B cell (primary cell): ENCODE measurements at regions of chr15 and their contacts with region 1.

Region 1: DNA sequence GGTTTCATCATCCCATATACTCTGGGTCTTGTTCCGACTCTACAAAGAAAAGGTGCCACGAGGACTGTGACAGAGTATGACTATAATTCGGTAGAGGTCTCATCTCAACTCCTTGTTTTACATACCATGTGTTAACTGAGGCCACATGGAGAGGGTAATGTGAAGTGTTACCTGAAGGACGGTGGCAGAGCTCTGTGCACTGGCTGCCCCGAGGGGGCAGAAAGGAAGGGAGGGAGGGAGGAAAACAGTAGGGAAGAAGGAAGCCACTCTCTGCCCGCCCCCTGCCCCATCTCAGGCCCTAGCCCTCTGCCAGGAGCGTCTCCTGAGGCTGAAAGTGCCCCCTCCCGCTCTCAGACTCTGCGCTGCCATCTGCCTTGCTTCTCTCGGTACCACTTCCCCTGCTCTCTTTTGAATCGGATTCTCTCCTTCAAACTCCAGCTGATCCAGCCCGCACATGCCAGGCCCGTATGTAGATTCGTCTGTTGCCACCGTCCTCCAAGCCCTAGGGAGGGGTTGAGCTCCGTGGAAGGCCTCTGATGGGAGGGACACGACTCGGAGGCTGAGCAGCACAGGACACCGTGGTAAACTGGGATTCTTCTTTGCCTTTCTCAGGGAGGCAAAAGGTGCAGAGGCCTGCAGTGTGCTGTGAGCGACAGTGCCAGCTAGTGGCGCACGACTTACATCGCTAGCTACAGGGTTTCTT is 70.5 kb upstream of the ATP10A start:
- DNase-seq: peak; percentile 71
- ATAC-seq: peak; percentile 76
- H3K4me3 ChIP-seq: peak overlapping the region in 4 of 5 experiments; percentile 23 to 50 (median 36)
- H3K4me3 Mint-ChIP-seq: peak overlapping the region; percentile 87
- H3K27ac ChIP-seq: no peak overlapping the region
- H3K27ac Mint-ChIP-seq: no peak overlapping the region
- H3K4me1 ChIP-seq: peaks cover 12 to 21% of the 10 kb centered on the region in 2 donors
- H3K4me1 Mint-ChIP-seq: peaks cover 18% of the 10 kb centered on the region
- H3K27me3 ChIP-seq: peaks cover 0 to 12% (median 2%) of the 10 kb centered on the region in 4 experiments
- H3K27me3 Mint-ChIP-seq: peaks cover 13% of the 10 kb centered on the region
- CTCF ChIP-seq: peak; percentile 59

Region 2: DNA sequence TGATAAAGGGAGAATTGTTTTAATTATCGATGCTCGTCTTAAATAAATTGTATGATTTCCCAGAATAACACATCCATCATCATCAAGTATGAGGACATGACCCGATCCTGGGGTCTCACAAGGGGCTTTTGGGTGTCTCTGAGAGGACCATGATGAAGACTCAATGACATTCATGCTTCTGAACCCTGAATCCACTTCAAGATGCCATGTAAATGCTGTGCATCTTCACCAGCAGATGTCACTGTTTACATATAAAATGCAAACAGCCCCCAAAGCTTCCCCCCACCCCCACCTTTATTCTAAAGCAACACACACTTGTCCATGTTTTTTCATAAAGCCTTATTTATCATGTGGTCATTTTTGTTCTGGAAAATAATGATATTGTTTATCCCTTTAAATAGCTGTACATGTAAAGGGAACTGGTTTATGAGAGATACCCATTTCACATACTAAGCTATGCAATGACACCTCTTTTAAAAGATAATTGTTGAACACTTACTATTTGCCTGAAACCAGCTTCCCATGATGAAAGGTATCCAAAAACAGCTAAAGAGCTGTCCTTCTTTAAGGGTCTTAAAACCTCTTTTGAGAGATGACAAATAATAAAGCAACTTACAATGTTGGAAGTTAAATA is 425.1 kb before region 1 on chr15:
- CTCF ChIA-PET with region 1: interaction called, 17 read pairs
- POLR2A ChIA-PET with region 1: no interaction called
- intact Hi-C with region 1: no loop called
- DNase-seq: peak; percentile 40
- ATAC-seq: no peak
- H3K4me3 ChIP-seq: no peak overlapping the region
- H3K4me3 Mint-ChIP-seq: no peak overlapping the region
- H3K27ac ChIP-seq: no peak overlapping the region
- H3K27ac Mint-ChIP-seq: no peak overlapping the region
- H3K4me1 ChIP-seq: no peaks in the 10 kb centered on the region
- H3K4me1 Mint-ChIP-seq: no peaks in the 10 kb centered on the region
- H3K27me3 ChIP-seq: no peaks in the 10 kb centered on the region
- H3K27me3 Mint-ChIP-seq: no peaks in the 10 kb centered on the region
- CTCF ChIP-seq: peak; percentile 56

Region 3: DNA sequence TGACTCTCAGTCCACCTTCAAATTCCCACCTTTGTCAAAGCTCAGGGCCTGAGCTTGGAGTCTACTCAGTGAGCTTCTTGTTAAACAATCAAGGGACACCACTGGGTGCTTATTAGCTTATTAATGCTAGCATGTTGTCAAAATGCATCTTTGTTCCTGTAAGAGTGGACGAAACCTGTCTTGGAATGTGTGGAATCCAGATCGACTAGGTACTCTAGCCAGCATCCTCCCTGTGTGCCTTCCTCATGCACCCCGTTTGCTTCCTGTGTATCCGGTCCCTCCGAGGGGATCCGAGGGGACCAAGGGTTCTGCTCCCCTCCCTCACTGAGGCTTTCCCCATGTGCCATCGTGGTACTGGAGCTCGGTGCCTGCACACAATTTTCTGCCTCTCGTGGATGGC is 419.1 kb before region 1 on chr15:
- CTCF ChIA-PET with region 1: no interaction called
- POLR2A ChIA-PET with region 1: interaction called, 10 read pairs
- intact Hi-C with region 1: no loop called
- DNase-seq: no peak
- ATAC-seq: no peak
- H3K4me3 ChIP-seq: no peak overlapping the region
- H3K4me3 Mint-ChIP-seq: no peak overlapping the region
- H3K27ac ChIP-seq: no peak overlapping the region
- H3K27ac Mint-ChIP-seq: no peak overlapping the region
- H3K4me1 ChIP-seq: no peaks in the 10 kb centered on the region
- H3K4me1 Mint-ChIP-seq: no peaks in the 10 kb centered on the region
- H3K27me3 ChIP-seq: no peaks in the 10 kb centered on the region
- H3K27me3 Mint-ChIP-seq: no peaks in the 10 kb centered on the region
- CTCF ChIP-seq: no peak

Region 4: GRCh38 chr15:25710184-25710583 is 223.4 kb before region 1 on chr15:
- CTCF ChIA-PET with region 1: interaction called, 14 read pairs
- POLR2A ChIA-PET with region 1: no interaction called
- intact Hi-C with region 1: no loop called
- DNase-seq: peak; percentile 26
- ATAC-seq: peak; percentile 36
- H3K4me3 ChIP-seq: no peak overlapping the region
- H3K4me3 Mint-ChIP-seq: no peak overlapping the region
- H3K27ac ChIP-seq: no peak overlapping the region
- H3K27ac Mint-ChIP-seq: no peak overlapping the region
- H3K4me1 ChIP-seq: no peaks in the 10 kb centered on the region
- H3K4me1 Mint-ChIP-seq: no peaks in the 10 kb centered on the region
- H3K27me3 ChIP-seq: no peaks in the 10 kb centered on the region
- H3K27me3 Mint-ChIP-seq: peaks cover 3% of the 10 kb centered on the region
- CTCF ChIP-seq: peak; percentile 61

Region 5: GRCh38 chr15:25944386-25944785 is 10.8 kb after region 1 on chr15:
- CTCF ChIA-PET with region 1: interaction called, 13 read pairs
- POLR2A ChIA-PET with region 1: no interaction called
- intact Hi-C with region 1: no loop called
- DNase-seq: no peak
- ATAC-seq: no peak
- H3K4me3 ChIP-seq: no peak overlapping the region
- H3K4me3 Mint-ChIP-seq: no peak overlapping the region
- H3K27ac ChIP-seq: no peak overlapping the region
- H3K27ac Mint-ChIP-seq: no peak overlapping the region
- H3K4me1 ChIP-seq: peaks cover 15 to 30% of the 10 kb centered on the region in 2 donors
- H3K4me1 Mint-ChIP-seq: peaks cover 31% of the 10 kb centered on the region
- H3K27me3 ChIP-seq: no peaks in the 10 kb centered on the region
- H3K27me3 Mint-ChIP-seq: no peaks in the 10 kb centered on the region
- CTCF ChIP-seq: no peak